Sigmoid colon (tissue), 7 donors: ENCODE measurements at regions of chr12 and their contacts with region 1.

Region 1: DNA sequence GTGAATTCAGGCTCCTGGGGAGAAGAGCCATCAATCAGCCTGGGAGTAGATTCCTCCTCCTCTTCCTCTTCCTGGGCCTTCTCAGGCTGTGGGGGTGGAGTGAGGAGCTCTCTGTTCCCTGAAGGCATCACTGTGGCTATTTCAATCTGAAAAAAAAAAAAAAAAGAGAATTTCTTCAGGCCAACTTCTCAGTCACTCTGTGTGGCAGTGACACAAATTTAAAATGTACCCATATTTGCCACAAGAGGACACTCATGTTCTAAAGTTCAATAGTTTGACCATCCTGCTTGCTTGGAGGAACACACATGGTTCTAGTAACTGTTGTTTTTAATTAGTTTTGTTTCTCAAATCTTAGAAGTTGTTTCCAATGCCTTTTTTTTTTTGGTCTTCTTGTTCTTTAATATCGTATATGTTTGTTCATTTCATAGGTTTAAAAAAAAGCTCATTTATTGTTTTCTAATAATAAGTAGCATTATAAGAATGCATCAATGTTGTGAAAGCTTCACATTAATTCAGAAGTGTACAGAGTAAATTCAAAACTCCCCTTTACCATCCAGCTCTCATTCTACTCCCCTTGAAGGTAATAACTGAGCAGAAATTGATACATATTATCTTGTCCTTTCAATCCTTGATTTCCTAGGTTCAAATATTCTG is 23.3 kb upstream of the CCER1 start:
- DNase-seq: no peak
- H3K4me3 ChIP-seq: no peak overlapping the region
- H3K27ac ChIP-seq: peak overlapping the region in 3 of 4 donors; percentile 17 to 44 (median 21)
- H3K4me1 ChIP-seq: peaks cover 0 to 3% (median 0%) of the 10 kb centered on the region in 4 donors
- H3K27me3 ChIP-seq: no peaks in the 10 kb centered on the region
- CTCF ChIP-seq: peak; percentile 47 to 75 (median 65)
- EP300 ChIP-seq: no peak
- POLR2A ChIP-seq: no peak

Region 2: DNA sequence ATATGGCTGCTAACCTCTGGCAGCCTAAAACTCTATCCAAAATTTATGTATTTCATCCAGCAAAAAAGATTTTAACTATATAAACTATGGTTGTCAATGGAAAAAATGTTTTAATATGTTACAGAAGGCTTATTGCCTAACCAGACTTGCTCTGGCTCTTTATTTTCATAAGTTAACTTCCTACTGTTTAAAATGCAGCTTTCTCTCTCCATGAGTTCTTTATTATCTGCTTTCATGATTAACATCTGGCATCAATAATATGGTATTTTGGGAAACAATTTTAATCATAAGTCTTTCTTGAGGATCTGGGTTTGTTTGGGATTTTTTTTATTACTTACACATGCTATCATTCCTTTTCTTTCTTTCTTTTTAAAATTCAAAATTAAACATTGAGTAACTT is 59.0 kb after region 1 on chr12:
- intact Hi-C with region 1: no loop called
- DNase-seq: no peak
- H3K4me3 ChIP-seq: no peak overlapping the region
- H3K27ac ChIP-seq: peak overlapping the region in 2 of 4 donors; percentile 0 to 18
- H3K4me1 ChIP-seq: peaks cover 0 to 8% (median 0%) of the 10 kb centered on the region in 4 donors
- H3K27me3 ChIP-seq: no peaks in the 10 kb centered on the region
- CTCF ChIP-seq: no peak
- EP300 ChIP-seq: no peak
- POLR2A ChIP-seq: no peak

Region 3: DNA sequence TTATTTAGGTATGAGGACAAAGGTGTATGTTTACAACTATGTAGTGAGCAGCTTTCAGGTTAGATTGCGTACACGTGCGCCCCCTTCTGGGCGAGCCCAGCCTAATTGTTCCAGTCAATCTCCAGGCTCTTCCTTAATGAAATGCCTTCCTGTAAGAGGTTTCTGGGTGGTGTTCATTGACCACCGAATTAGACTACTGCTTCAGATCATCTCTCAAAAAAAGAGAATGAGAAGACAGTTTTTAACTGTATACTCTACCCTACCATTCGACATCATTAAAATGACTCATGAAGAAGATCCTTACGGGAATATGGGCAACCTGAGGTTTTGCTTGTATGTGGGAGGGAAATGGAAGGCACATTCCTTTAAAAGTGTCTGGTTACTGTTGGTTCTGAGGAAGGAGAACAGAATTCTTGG is 130.9 kb after region 1 on chr12:
- intact Hi-C with region 1: loop called (anchors 5 kb)
- DNase-seq: peak; percentile 85
- H3K4me3 ChIP-seq: peak overlapping the region in 2 of 4 donors; percentile 33 to 34
- H3K27ac ChIP-seq: peak overlapping the region; percentile 25 to 61 (median 38)
- H3K4me1 ChIP-seq: peaks cover 0 to 17% (median 9%) of the 10 kb centered on the region in 4 donors
- H3K27me3 ChIP-seq: no peaks in the 10 kb centered on the region
- CTCF ChIP-seq: peak in 2 of 4 experiments; percentile 29 to 42
- EP300 ChIP-seq: no peak
- POLR2A ChIP-seq: no peak

Region 4: GRCh38 chr12:91178139-91178561 is 199.9 kb after region 1 on chr12:
- intact Hi-C with region 1: loop called (anchors 2 kb)
- DNase-seq: no peak
- H3K4me3 ChIP-seq: peak overlapping the region; percentile 21 to 40 (median 37)
- H3K27ac ChIP-seq: peak overlapping the region; percentile 60 to 75 (median 70)
- H3K4me1 ChIP-seq: peaks cover 0 to 23% (median 3%) of the 10 kb centered on the region in 4 donors
- H3K27me3 ChIP-seq: no peaks in the 10 kb centered on the region
- CTCF ChIP-seq: peak; percentile 33 to 52 (median 45)
- EP300 ChIP-seq: no peak
- POLR2A ChIP-seq: no peak

Region 5: GRCh38 chr12:91326058-91327027 is 348.1 kb after region 1 on chr12:
- intact Hi-C with region 1: loop called (anchors 2 kb)
- DNase-seq: peak; percentile 66
- H3K4me3 ChIP-seq: peak overlapping the region in 1 of 4 donors; percentile 1
- H3K27ac ChIP-seq: peak overlapping the region; percentile 30 to 57 (median 37)
- H3K4me1 ChIP-seq: peaks cover 0 to 14% (median 10%) of the 10 kb centered on the region in 4 donors
- H3K27me3 ChIP-seq: no peaks in the 10 kb centered on the region
- CTCF ChIP-seq: peak; percentile 59 to 65 (median 63)
- EP300 ChIP-seq: no peak
- POLR2A ChIP-seq: no peak

Region 6: GRCh38 chr12:91355150-91356006 is 377.1 kb after region 1 on chr12:
- intact Hi-C with region 1: loop called (anchors 2 kb)
- DNase-seq: peak; percentile 84
- H3K4me3 ChIP-seq: no peak overlapping the region
- H3K27ac ChIP-seq: peak overlapping the region in 1 of 4 donors; percentile 17
- H3K4me1 ChIP-seq: peaks cover 0 to 11% (median 7%) of the 10 kb centered on the region in 4 donors
- H3K27me3 ChIP-seq: no peaks in the 10 kb centered on the region
- CTCF ChIP-seq: peak; percentile 55 to 86 (median 80)
- EP300 ChIP-seq: no peak
- POLR2A ChIP-seq: no peak